Calu3 (cell line): ENCODE measurements at regions of chr5 and their contacts with region 1.

Region 1: GRCh38 chr5:5419294-5420210 is 2.9 kb upstream of the ICE1 start:
- DNase-seq: peak; percentile 4
- H3K4me3 Mint-ChIP-seq: no peak overlapping the region
- H3K27ac Mint-ChIP-seq: no peak overlapping the region
- H3K4me1 Mint-ChIP-seq: peaks cover 10% of the 10 kb centered on the region
- H3K27me3 Mint-ChIP-seq: peaks cover 17% of the 10 kb centered on the region
- CTCF ChIP-seq: peak; percentile 59

Region 2: DNA sequence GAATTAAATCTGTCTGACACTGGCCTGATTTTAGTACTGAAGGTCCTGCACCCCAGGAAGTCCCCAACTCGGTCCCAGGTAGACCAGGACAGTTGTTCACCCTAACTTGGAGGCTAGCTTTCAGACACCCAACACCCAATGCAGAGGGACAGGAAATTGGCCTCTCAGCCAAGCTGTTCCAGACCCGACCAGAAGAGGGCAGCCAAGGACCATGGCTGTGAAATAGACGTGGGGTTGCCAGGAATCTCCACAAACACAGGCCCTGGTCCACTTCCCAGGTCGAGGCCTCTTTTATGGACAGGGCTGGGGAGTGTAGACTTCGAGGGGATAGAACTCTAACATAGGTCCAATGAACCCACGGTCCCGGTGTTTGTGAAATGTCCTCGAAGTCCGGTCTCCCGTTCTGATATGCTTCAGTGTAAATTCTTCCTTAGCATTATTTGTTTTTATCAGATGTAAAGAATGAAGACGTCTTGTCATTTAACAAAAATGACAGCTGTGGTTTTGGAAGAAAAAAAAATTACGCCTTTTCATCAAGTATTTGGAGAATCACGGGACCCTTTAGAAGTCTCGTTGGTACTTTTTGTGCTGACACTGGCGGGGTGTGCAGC is 539.8 kb before region 1 on chr5:
- CTCF ChIA-PET with region 1: interaction called, 4 read pairs
- intact Hi-C with region 1: loop called (anchors 1 kb)
- DNase-seq: peak; percentile 75
- H3K4me3 Mint-ChIP-seq: no peak overlapping the region
- H3K27ac Mint-ChIP-seq: no peak overlapping the region
- H3K4me1 Mint-ChIP-seq: no peaks in the 10 kb centered on the region
- H3K27me3 Mint-ChIP-seq: no peaks in the 10 kb centered on the region
- CTCF ChIP-seq: peak; percentile 65

Region 3: DNA sequence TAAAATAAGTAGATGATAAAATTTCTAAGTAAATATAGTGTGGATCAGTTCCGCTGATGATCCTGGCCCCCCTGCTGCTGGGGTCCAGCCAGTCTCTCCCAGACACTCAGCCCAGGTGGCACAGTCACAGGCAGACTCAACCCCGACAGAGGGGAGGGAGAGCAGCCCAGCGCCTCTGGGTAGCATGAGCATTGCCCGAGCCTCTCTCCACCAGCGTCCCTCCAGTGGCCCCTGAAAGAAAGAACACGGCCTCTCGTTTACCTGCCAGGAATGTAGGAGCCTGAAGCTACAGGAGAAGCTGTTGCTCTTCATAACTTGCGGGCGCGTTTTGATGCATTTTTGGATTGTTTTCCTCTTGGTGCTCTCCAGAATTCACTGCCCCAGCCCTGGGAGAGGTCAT is 65.9 kb before region 1 on chr5:
- CTCF ChIA-PET with region 1: no interaction called
- intact Hi-C with region 1: no loop called
- DNase-seq: no peak
- H3K4me3 Mint-ChIP-seq: no peak overlapping the region
- H3K27ac Mint-ChIP-seq: no peak overlapping the region
- H3K4me1 Mint-ChIP-seq: no peaks in the 10 kb centered on the region
- H3K27me3 Mint-ChIP-seq: peaks cover 4% of the 10 kb centered on the region
- CTCF ChIP-seq: no peak